ENCODE measurements at regions of chr1 and their contacts with region 1.

Region 1: GRCh38 chr1:153626922-153627796 is at the start of gene S100A13:
- DNase-seq: peak; percentile 95
- ATAC-seq: peak; percentile 93
- H3K4me3 Mint-ChIP-seq: peak within 1 kb of the TSS; percentile 81
- H3K27ac Mint-ChIP-seq: peak within 1 kb of the TSS; percentile 93
- H3K4me1 Mint-ChIP-seq: peaks cover 56% of the 10 kb centered on the region
- H3K27me3 Mint-ChIP-seq: no peaks in the 10 kb centered on the region
- CTCF ChIP-seq: peak; percentile 72; the same call in 1 of the 2 replicates
- total RNA-seq, gene S100A13: 68.4 to 84.2 TPM (median 73.9 TPM) in 3 replicates

Region 2: DNA sequence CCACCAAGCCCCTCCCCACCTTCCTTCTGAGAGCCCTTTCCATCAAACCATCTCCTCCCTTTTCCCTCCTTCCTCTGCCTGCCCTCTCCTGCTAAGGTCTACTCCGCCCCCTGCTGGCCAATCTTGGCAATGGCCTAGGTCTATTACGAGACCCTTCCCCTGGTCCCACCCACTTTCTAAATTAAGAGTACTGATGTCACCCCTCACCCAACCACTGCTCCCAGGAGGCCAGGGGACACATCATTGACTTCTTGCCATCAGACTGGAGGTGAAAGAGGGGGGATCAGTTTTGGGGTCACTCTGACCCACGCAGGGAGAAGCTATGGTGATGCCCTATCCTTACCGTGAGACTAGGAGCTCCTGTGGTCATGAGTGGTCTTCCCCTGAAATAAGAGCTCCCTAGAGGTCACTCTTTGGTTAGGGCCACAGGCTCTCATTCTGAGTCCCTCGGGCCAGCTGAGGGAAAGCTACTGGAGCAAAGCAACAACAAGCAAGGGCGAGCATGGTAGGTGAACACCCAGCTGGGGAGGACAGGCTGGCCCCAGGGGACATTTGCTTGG is 132.1 kb before region 1 on chr1:
- CTCF ChIA-PET with region 1: interaction called, 16 read pairs
- POLR2A ChIA-PET with region 1: no interaction called
- DNase-seq: peak; percentile 99
- ATAC-seq: peak; percentile 96
- H3K4me3 Mint-ChIP-seq: no peak overlapping the region
- H3K27ac Mint-ChIP-seq: peak overlapping the region; percentile 56; the same call in 1 of the 2 replicates
- H3K4me1 Mint-ChIP-seq: peaks cover 23% of the 10 kb centered on the region
- H3K27me3 Mint-ChIP-seq: no peaks in the 10 kb centered on the region; the same call in 1 of the 2 replicates
- CTCF ChIP-seq: peak; percentile 95

Region 3: GRCh38 chr1:153526132-153526543 is 101.0 kb before region 1 on chr1:
- CTCF ChIA-PET with region 1: interaction called, 18 read pairs
- POLR2A ChIA-PET with region 1: no interaction called
- DNase-seq: no peak
- ATAC-seq: no peak
- H3K4me3 Mint-ChIP-seq: no peak overlapping the region
- H3K27ac Mint-ChIP-seq: no peak overlapping the region
- H3K4me1 Mint-ChIP-seq: peaks cover 25% of the 10 kb centered on the region
- H3K27me3 Mint-ChIP-seq: peaks cover 10% of the 10 kb centered on the region
- CTCF ChIP-seq: no peak

Region 4: GRCh38 chr1:153566440-153567379 is 60.4 kb before region 1 on chr1:
- CTCF ChIA-PET with region 1: interaction called, 98 read pairs
- POLR2A ChIA-PET with region 1: interaction called, 5 read pairs
- DNase-seq: peak; percentile 65
- ATAC-seq: peak; percentile 72
- H3K4me3 Mint-ChIP-seq: no peak overlapping the region
- H3K27ac Mint-ChIP-seq: peak overlapping the region; percentile 85
- H3K4me1 Mint-ChIP-seq: peaks cover 33% of the 10 kb centered on the region
- H3K27me3 Mint-ChIP-seq: no peaks in the 10 kb centered on the region
- CTCF ChIP-seq: no peak

Region 5: GRCh38 chr1:153587314-153587713 is 39.8 kb before region 1 on chr1:
- CTCF ChIA-PET with region 1: interaction called, 29 read pairs
- POLR2A ChIA-PET with region 1: interaction called, 3 read pairs
- DNase-seq: no peak
- ATAC-seq: no peak
- H3K4me3 Mint-ChIP-seq: no peak overlapping the region
- H3K27ac Mint-ChIP-seq: no peak overlapping the region
- H3K4me1 Mint-ChIP-seq: peaks cover 4% of the 10 kb centered on the region
- H3K27me3 Mint-ChIP-seq: no peaks in the 10 kb centered on the region
- CTCF ChIP-seq: no peak

Region 6: DNA sequence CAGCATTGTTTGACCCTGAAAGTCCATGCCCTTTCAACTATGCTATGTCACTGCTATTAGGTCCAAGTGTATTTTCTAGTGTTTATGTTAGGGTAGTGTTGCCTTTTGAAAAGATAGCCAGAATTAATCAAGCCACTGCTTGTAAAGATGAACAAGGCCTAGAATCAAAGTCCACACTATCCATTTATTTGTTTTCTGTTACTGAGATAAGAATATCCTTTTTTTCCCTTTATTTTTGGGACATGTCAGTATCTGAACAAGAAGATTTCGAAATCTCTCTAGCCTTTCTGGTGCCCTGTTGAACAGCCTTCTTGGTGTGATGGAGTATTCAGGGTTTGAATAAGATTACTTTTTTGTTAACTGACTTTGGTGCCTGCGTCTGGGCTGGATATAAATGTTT is 610.3 kb after region 1 on chr1:
- CTCF ChIA-PET with region 1: no interaction called
- POLR2A ChIA-PET with region 1: no interaction called
- DNase-seq: no peak
- ATAC-seq: no peak
- H3K4me3 Mint-ChIP-seq: no peak overlapping the region
- H3K27ac Mint-ChIP-seq: peak overlapping the region; percentile 69; the same call in 1 of the 2 replicates
- H3K4me1 Mint-ChIP-seq: no peaks in the 10 kb centered on the region
- H3K27me3 Mint-ChIP-seq: no peaks in the 10 kb centered on the region
- CTCF ChIP-seq: no peak

Measured in WTC11 (cell line).